Adrenal gland (tissue), 19 donors: ENCODE measurements at regions of chr12 and their contacts with region 1.

Region 1: DNA sequence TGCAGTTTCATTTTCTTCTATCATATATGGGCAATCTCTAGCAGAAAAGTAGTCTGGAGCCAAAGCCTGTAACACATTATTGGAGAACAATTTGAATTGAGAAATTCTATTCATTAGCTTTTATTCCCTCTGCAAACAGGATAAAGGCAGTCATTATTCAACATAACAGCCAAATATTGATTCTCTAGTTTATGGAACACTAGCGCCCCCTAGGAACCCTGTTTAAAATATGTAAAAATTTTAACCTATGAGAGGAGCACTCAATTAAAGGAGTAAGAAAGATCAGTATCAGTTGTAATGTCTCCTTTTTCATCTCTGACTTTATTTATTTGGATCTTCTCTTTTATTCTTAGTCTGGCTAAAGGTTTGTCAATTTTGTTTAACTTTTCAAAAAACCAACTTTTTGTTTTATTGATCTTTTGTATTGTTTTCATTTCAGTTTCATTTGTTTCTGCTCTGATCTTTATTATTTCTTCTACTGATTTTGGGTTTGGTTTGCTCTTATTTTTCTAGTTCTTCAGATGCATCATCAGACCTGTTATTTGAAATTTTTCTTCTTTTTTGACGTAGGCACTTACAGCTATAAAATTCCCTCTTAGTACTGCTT is 4.8 kb upstream of the LMNTD1 start:
- DNase-seq: peak in 4 of 7 donors; percentile 14 to 58 (median 34)
- H3K4me3 ChIP-seq: no peak overlapping the region
- H3K27ac ChIP-seq: no peak overlapping the region
- H3K4me1 ChIP-seq: no peaks in the 10 kb centered on the region
- H3K27me3 ChIP-seq: no peaks in the 10 kb centered on the region
- CTCF ChIP-seq: peak; percentile 38 to 57 (median 52)
- POLR2A ChIP-seq: no peak

Region 2: GRCh38 chr12:25436203-25437030 is 121.5 kb before region 1 on chr12:
- intact Hi-C with region 1: loop called in 1 of 2 experiments (anchors 10 kb)
- DNase-seq: peak in 6 of 7 donors; percentile 35 to 61 (median 53)
- H3K4me3 ChIP-seq: peak overlapping the region in 2 of 4 donors; percentile 28 to 54
- H3K27ac ChIP-seq: peak overlapping the region in 2 of 5 donors; percentile 40 to 69
- H3K4me1 ChIP-seq: peaks cover 0 to 6% of the 10 kb centered on the region in 2 donors
- H3K27me3 ChIP-seq: no peaks in the 10 kb centered on the region
- CTCF ChIP-seq: peak; percentile 76 to 89 (median 84)
- POLR2A ChIP-seq: no peak